ENCODE measurements at regions of chr18 and their contacts with region 1.

Region 1: GRCh38 chr18:31274915-31275314 is 43.0 kb upstream of the DSG1 start:
- DNase-seq: peak; percentile 99
- H3K4me3 Mint-ChIP-seq: peak overlapping the region; percentile 59
- H3K27ac Mint-ChIP-seq: peak overlapping the region; percentile 97
- H3K4me1 Mint-ChIP-seq: peaks cover 34% of the 10 kb centered on the region
- H3K27me3 Mint-ChIP-seq: no peaks in the 10 kb centered on the region
- CTCF ChIP-seq: no peak

Region 2: GRCh38 chr18:31101183-31102024 is 173.5 kb before region 1 on chr18:
- CTCF ChIA-PET with region 1: interaction called, 3 read pairs
- POLR2A ChIA-PET with region 1: interaction called, 11 read pairs
- intact Hi-C with region 1: no loop called
- DNase-seq: peak; percentile 53
- H3K4me3 Mint-ChIP-seq: peak overlapping the region; percentile 82
- H3K27ac Mint-ChIP-seq: peak overlapping the region; percentile 81
- H3K4me1 Mint-ChIP-seq: peaks cover 30% of the 10 kb centered on the region
- H3K27me3 Mint-ChIP-seq: no peaks in the 10 kb centered on the region
- CTCF ChIP-seq: no peak

Region 3: GRCh38 chr18:31294199-31294752 is 19.4 kb after region 1 on chr18:
- CTCF ChIA-PET with region 1: interaction called, 3 read pairs
- POLR2A ChIA-PET with region 1: interaction called, 16 read pairs
- intact Hi-C with region 1: no loop called
- DNase-seq: peak; percentile 16
- H3K4me3 Mint-ChIP-seq: no peak overlapping the region
- H3K27ac Mint-ChIP-seq: no peak overlapping the region
- H3K4me1 Mint-ChIP-seq: peaks cover 8% of the 10 kb centered on the region
- H3K27me3 Mint-ChIP-seq: no peaks in the 10 kb centered on the region
- CTCF ChIP-seq: no peak

Region 4: DNA sequence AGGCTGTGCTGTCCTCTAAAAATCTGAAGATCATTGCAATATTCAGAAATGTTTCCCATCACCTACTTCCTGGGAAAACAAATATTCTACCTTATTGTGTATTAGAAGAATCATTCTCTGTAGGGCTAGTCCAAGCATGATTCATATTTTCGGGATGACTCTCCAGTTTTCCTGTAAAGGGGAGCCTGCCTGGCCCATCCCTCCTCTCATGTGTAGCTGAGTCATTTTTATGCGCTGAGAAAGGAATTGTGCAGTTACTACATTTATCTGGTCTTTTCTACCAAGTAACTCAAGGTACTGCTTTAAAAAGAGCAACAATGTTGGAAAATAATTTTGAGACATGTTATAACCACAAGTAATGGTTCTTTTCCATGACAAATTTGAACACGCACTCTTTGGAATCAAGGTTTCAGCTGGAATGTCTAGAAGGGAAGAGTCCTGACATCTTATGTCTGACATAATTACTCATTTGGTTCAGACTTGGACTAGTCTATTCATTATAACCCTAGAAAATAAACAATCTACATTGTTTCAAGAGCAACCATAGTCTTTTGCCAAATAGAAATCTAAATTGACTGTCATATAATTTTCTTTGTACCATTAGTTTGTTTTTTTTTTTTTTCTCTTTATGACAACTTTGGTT is 179.3 kb after region 1 on chr18:
- CTCF ChIA-PET with region 1: no interaction called
- POLR2A ChIA-PET with region 1: interaction called, 192 read pairs
- intact Hi-C with region 1: no loop called
- DNase-seq: peak; percentile 96
- H3K4me3 Mint-ChIP-seq: peak overlapping the region; percentile 67
- H3K27ac Mint-ChIP-seq: peak overlapping the region; percentile 94
- H3K4me1 Mint-ChIP-seq: peaks cover 23% of the 10 kb centered on the region
- H3K27me3 Mint-ChIP-seq: no peaks in the 10 kb centered on the region
- CTCF ChIP-seq: no peak

Region 5: DNA sequence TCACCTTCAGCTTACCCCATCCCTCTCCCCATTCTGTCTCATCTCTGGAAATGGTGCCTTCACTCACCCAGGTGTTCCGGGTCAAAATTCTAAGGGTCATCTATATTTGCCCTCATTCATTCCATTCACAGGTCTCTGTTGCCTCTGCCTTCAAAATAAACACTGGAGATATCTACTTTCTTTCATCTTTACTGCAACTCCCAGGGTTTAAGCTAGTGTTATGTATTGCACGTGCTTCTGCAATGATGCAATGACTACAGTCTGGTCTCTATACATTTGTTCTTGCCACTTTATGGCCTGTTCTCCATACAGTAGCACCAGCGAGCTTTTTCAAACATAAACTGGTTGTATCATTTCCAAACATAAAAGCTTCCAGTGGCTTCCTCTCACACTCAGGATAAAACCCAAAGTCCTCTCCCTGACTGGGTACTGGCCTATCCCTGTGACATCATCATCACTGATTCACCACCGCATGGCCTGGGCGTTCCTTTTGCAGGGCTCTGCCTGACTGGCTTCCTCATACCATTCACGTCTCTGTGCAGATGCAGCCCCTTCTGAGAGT is 237.4 kb after region 1 on chr18:
- CTCF ChIA-PET with region 1: interaction called, 4 read pairs
- POLR2A ChIA-PET with region 1: interaction called, 11 read pairs
- intact Hi-C with region 1: no loop called
- DNase-seq: peak; percentile 87
- H3K4me3 Mint-ChIP-seq: peak overlapping the region; percentile 59
- H3K27ac Mint-ChIP-seq: peak overlapping the region; percentile 95
- H3K4me1 Mint-ChIP-seq: peaks cover 51% of the 10 kb centered on the region
- H3K27me3 Mint-ChIP-seq: no peaks in the 10 kb centered on the region
- CTCF ChIP-seq: no peak

Measured in MCF 10A (cell line).